ENCODE measurements at regions of chr11 and their contacts with region 1.

Region 1: GRCh38 chr11:112280268-112281126 is 19.8 kb upstream of the PLET1 start:
- DNase-seq: peak; percentile 66
- ATAC-seq: peak; percentile 95
- H3K4me3 ChIP-seq: peak overlapping the region; percentile 51
- H3K27ac ChIP-seq: no peak overlapping the region
- H3K4me1 ChIP-seq: no peaks in the 10 kb centered on the region
- H3K27me3 ChIP-seq: no peaks in the 10 kb centered on the region
- CTCF ChIP-seq: peak; percentile 64

Region 2: GRCh38 chr11:112219476-112220232 is 60.8 kb before region 1 on chr11:
- intact Hi-C with region 1: loop called (anchors 2 kb)
- DNase-seq: no peak
- ATAC-seq: peak; percentile 97
- H3K4me3 ChIP-seq: no peak overlapping the region
- H3K27ac ChIP-seq: no peak overlapping the region
- H3K4me1 ChIP-seq: peaks cover 9% of the 10 kb centered on the region
- H3K27me3 ChIP-seq: no peaks in the 10 kb centered on the region
- CTCF ChIP-seq: peak; percentile 83

Region 3: DNA sequence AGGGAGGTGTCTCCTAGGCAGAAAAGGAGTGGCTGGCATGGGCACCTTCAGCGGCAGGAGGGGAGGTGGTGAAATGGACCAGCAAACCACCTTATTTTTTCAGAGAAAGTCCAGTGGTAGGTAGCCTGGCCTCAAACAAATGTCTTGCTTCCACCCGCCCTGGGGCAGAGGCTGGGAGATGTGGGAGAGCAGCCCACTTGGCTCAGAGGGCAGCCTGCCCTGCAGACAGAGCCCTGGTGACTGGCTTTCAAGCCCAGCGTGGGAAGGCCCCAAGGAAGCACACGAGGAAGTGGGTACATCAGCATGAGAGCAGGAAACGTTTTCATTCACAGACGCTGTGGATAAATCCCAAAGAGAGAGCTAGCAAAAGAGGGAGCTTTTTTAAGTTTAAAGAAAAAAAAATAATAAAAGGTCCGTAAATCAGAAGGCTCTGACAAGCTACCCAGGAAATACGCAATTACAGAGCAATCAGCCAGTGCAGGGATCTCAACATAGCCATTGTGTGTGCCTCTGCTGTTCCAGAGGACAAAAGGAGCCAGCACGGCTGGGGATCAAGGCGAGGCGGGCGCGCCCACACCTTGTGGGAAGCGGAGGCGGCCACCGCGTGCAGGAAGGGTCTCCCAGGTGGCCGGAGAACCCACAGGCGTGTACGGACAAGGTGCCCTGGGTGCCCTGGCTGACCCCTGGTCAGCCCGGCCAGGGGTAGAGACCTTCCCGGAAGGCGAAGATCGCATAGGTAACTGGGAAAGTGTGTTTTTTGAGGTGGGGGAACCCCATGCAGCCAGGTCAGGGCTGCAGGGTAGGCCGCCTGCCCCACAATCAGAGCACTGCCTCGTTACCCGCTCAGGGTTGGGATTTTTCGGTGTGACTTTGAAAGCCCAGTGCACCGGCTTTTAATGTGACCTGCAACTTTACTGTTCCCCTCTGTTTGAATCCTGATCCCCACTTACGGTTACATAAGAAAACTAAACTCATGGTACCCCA is 219.0 kb after region 1 on chr11:
- intact Hi-C with region 1: no loop called
- DNase-seq: no peak
- ATAC-seq: no peak
- H3K4me3 ChIP-seq: no peak overlapping the region
- H3K27ac ChIP-seq: no peak overlapping the region
- H3K4me1 ChIP-seq: no peaks in the 10 kb centered on the region
- H3K27me3 ChIP-seq: no peaks in the 10 kb centered on the region
- CTCF ChIP-seq: no peak

Region 4: GRCh38 chr11:112555491-112556364 is 275.2 kb after region 1 on chr11:
- intact Hi-C with region 1: loop called (anchors 10 kb)
- DNase-seq: peak; percentile 84
- ATAC-seq: peak; percentile 92
- H3K4me3 ChIP-seq: no peak overlapping the region
- H3K27ac ChIP-seq: no peak overlapping the region
- H3K4me1 ChIP-seq: no peaks in the 10 kb centered on the region
- H3K27me3 ChIP-seq: no peaks in the 10 kb centered on the region
- CTCF ChIP-seq: peak; percentile 73